Mammary epithelial cell (primary cell): ENCODE measurements at regions of chr7 and their contacts with region 1.

Region 1: DNA sequence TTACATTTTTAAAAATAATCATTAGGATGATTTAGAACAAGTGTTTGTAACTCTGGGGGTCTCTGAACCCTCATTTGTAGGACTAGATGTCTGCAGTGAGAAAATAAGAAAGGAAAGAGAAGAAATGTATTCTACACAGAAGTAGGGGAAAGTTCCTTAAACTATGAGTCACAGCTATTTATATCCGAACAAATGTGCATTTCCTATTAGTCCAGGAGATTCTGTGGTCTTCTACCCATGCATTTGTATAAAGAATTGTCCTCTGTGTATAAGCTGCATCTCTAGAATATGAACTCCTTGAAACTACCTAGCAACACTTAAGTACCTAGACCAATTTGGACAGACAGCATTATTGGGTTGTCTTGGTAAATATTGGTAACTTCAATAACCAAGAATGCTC is 15.9 kb upstream of the CD36 start:
- DNase-seq: peak; percentile 23
- H3K4me3 ChIP-seq: no peak overlapping the region
- H3K27ac ChIP-seq: no peak overlapping the region
- H3K4me1 ChIP-seq: peaks cover 19% of the 10 kb centered on the region
- H3K27me3 ChIP-seq: no peaks in the 10 kb centered on the region
- CTCF ChIP-seq: no peak

Region 2: DNA sequence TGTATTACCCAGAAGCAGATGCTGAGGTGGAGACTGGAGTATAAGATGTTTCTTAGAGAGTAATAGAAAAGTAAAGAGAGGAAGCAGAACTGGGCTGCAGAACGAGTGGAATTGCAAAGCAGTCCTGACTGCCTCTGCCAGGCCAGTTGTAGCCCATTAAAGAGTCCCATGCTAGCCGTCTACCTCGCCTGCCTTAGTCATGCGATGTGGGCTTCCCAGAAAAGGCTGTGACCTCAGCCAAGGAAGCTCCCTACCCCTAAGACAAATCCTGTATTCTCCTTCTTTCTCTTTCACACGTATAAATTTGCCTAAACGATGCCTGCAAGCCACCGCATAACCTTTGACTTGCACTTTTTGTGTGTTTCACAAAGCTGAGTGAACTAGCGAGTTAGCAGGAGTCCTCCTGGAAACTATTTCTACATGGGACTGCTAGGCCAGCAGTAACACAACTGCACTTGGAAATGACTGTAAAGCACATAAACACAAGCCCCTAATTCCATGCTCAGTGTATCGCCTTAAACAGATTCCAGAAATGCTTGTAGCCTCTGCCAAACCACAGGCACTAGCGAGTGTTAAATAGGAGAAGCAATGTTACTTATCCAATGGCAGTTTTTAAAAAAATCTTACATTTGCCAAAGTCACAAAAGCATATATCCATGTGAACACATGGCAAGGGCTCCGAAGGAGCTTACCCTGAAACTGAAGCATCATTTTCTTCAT is 535.3 kb before region 1 on chr7:
- CTCF ChIA-PET with region 1: no interaction called
- dilution Hi-C with region 1: no loop called
- in situ Hi-C with region 1: no loop called
- intact Hi-C with region 1: no loop called
- DNase-seq: no peak
- H3K4me3 ChIP-seq: no peak overlapping the region
- H3K27ac ChIP-seq: no peak overlapping the region
- H3K4me1 ChIP-seq: peaks cover 14% of the 10 kb centered on the region
- H3K27me3 ChIP-seq: no peaks in the 10 kb centered on the region
- CTCF ChIP-seq: no peak

Region 3: GRCh38 chr7:80244206-80244916 is 378.2 kb before region 1 on chr7:
- CTCF ChIA-PET with region 1: interaction called, 17 read pairs
- dilution Hi-C with region 1: no loop called
- in situ Hi-C with region 1: no loop called
- intact Hi-C with region 1: no loop called
- DNase-seq: no peak
- H3K4me3 ChIP-seq: no peak overlapping the region
- H3K27ac ChIP-seq: no peak overlapping the region
- H3K4me1 ChIP-seq: no peaks in the 10 kb centered on the region
- H3K27me3 ChIP-seq: no peaks in the 10 kb centered on the region
- CTCF ChIP-seq: no peak

Region 4: GRCh38 chr7:80666376-80666775 is 43.8 kb after region 1 on chr7:
- CTCF ChIA-PET with region 1: no interaction called
- dilution Hi-C with region 1: no loop called
- in situ Hi-C with region 1: no loop called
- intact Hi-C with region 1: no loop called
- DNase-seq: peak; percentile 25
- H3K4me3 ChIP-seq: no peak overlapping the region
- H3K27ac ChIP-seq: no peak overlapping the region
- H3K4me1 ChIP-seq: peaks cover 13% of the 10 kb centered on the region
- H3K27me3 ChIP-seq: no peaks in the 10 kb centered on the region
- CTCF ChIP-seq: no peak